Naive thymus-derived CD4-positive, alpha-beta T cell (primary cell): ENCODE measurements at regions of chr19 and their contacts with region 1.

Region 1: DNA sequence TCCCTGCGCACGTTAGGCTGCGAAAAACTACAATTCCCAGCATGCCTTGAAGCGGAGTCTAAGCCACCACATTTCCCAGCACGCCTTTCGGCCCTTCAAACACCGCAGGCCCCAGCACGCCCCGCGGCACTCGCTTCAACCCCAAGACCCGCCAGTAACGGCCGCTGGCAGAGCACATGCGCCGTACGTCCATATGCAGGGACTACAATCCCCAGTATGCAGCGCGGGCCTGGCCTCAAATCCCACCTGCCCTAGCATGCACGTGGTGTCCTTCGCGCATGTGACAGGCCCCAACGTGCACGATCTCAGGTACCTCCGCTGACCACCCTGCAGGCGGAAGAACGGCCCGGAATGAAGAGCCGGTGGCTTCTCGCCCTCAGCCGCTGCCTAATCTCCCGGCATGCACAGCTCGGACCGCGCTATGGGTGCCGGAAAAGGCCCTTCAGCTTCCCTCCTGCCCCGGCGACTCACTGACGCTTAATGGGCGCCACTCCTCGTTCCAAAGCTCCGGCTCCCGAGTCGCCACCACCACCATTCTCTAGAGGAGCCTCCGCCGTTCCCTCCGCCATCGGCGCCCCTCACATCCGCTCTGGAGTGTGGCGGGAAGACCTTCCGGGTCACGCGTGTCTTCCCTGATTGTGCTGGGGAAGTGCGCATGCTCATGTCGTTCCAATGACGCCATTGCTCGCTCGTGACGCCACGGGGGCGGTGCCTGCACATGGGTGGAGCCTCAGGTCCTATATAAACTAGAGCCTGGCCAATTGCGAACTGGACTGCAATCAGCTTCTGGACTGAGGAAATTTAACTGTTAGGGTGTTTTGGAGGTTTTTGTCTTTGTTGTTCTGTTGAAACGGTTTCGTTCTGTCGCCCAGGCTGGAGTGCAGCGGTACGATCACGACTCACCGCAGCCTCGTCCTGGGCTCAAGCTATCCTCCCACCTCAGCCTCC is at the start of gene DUS3L:
- DNase-seq: peak; percentile 90 to 97 (median 94)
- ATAC-seq: peak; percentile 97
- H3K4me3 ChIP-seq: peak within 1 kb of the TSS; percentile 95
- H3K4me3 Mint-ChIP-seq: peak within 1 kb of the TSS; percentile 94 to 100 (median 100)
- H3K27ac ChIP-seq: peak within 1 kb of the TSS; percentile 91
- H3K27ac Mint-ChIP-seq: peak within 1 kb of the TSS; percentile 99 to 100 (median 100)
- H3K4me1 ChIP-seq: peaks cover 8 to 12% of the 10 kb centered on the region in 2 donors
- H3K4me1 Mint-ChIP-seq: peaks cover 6 to 22% (median 15%) of the 10 kb centered on the region in 7 donors
- H3K27me3 ChIP-seq: no peaks in the 10 kb centered on the region
- H3K27me3 Mint-ChIP-seq: no peaks in the 10 kb centered on the region
- total RNA-seq, gene DUS3L: 53.2 to 179 (median 82.7) TPM

Region 2: GRCh38 chr19:5622463-5623396 is 168.1 kb before region 1 on chr19 and contains the starts of genes SAFB and SAFB2:
- CTCF ChIA-PET with region 1: no interaction called
- POLR2A ChIA-PET with region 1: no interaction called
- intact Hi-C with region 1: loop called (anchors 1 to 2 kb)
- DNase-seq: peak; percentile 96 to 100 (median 100)
- ATAC-seq: peak; percentile 91
- H3K4me3 ChIP-seq: peak within 1 kb of the TSS; percentile 91
- H3K4me3 Mint-ChIP-seq: peak within 1 kb of the TSS; percentile 97 to 100 (median 100)
- H3K27ac ChIP-seq: peak within 1 kb of the TSS; percentile 97
- H3K27ac Mint-ChIP-seq: peak within 1 kb of the TSS; percentile 99 to 100 (median 100)
- H3K4me1 ChIP-seq: peaks cover 54 to 66% of the 10 kb centered on the region in 2 donors
- H3K4me1 Mint-ChIP-seq: peaks cover 52 to 79% (median 70%) of the 10 kb centered on the region in 7 donors
- H3K27me3 ChIP-seq: no peaks in the 10 kb centered on the region
- H3K27me3 Mint-ChIP-seq: peaks cover 0 to 5% (median 0%) of the 10 kb centered on the region in 5 donors
- total RNA-seq, gene SAFB: 141 to 203 (median 174) TPM
- total RNA-seq, gene SAFB2: 112 to 250 (median 243) TPM

Region 3: GRCh38 chr19:5680437-5681368 is 110.1 kb before region 1 on chr19 and contains the starts of genes HSD11B1L and MICOS13:
- CTCF ChIA-PET with region 1: no interaction called
- POLR2A ChIA-PET with region 1: interaction called, 4 read pairs
- intact Hi-C with region 1: loop called (anchors 1 kb)
- DNase-seq: peak; percentile 98 to 99 (median 99)
- ATAC-seq: peak; percentile 96
- H3K4me3 ChIP-seq: peak within 1 kb of the TSS; percentile 100
- H3K4me3 Mint-ChIP-seq: peak within 1 kb of the TSS; percentile 85 to 97 (median 94)
- H3K27ac ChIP-seq: peak within 1 kb of the TSS; percentile 98
- H3K27ac Mint-ChIP-seq: peak within 1 kb of the TSS; percentile 94 to 100 (median 97)
- H3K4me1 ChIP-seq: peaks cover 8 to 18% of the 10 kb centered on the region in 2 donors
- H3K4me1 Mint-ChIP-seq: peaks cover 20 to 33% (median 25%) of the 10 kb centered on the region in 7 donors
- H3K27me3 ChIP-seq: no peaks in the 10 kb centered on the region
- H3K27me3 Mint-ChIP-seq: peaks cover 0 to 18% (median 0%) of the 10 kb centered on the region in 5 donors
- total RNA-seq, gene HSD11B1L: 2.8 to 5.2 (median 3.6) TPM
- total RNA-seq, gene MICOS13: 26.1 to 49.3 (median 38.4) TPM

Region 4: DNA sequence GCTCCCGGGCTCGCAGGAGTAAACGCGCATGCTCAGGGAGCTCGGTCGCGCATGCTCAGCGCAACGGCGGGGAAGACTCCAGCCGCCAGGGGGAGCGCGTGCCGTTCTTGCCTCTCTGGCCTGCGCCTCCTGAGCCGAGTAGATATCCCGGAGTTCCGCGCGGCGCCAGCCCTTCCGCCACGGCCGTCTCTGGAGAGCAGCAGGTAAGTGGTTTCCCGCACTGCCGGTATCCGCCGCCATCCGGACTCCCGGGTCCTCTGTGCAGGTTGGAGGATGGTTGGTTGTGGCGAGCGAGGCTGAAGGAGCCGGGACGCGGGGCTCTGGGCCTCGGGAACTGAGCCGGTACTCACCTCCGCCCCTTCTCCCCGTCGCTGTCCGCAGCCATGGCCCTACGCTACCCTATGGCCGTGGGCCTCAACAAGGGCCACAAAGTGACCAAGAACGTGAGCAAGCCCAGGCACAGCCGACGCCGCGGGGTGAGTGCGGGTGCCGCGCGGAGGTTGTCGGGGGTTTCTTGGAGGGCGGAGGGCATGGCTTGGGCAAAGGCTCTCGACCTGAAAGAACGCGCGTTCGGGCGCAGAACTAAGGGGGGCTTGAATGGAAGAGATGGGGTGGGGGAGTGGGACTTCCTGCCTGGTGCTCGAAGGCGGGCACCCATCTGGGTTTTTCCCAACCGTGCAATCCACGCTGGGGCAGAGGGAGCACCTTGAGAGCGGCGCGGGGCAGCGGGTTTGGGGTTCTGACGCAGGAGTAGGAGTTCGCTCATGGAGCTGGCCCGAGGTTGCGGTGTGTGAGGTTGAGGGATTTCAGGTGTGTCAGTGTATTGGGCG is 100.5 kb before region 1 on chr19 and contains the start of gene RPL36:
- CTCF ChIA-PET with region 1: no interaction called
- POLR2A ChIA-PET with region 1: interaction called, 5 read pairs
- intact Hi-C with region 1: loop called (anchors 1 to 2 kb)
- DNase-seq: peak; percentile 95 to 100 (median 99)
- ATAC-seq: peak; percentile 77
- H3K4me3 ChIP-seq: peak within 1 kb of the TSS; percentile 90
- H3K4me3 Mint-ChIP-seq: peak within 1 kb of the TSS; percentile 90 to 98 (median 94)
- H3K27ac ChIP-seq: peak within 1 kb of the TSS; percentile 85
- H3K27ac Mint-ChIP-seq: peak within 1 kb of the TSS; percentile 89 to 97 (median 93)
- H3K4me1 ChIP-seq: peaks cover 12 to 21% of the 10 kb centered on the region in 2 donors
- H3K4me1 Mint-ChIP-seq: peaks cover 5 to 39% (median 33%) of the 10 kb centered on the region in 7 donors
- H3K27me3 ChIP-seq: no peaks in the 10 kb centered on the region
- H3K27me3 Mint-ChIP-seq: no peaks in the 10 kb centered on the region
- total RNA-seq, gene RPL36: 865 to 1,786 (median 1,037) TPM

Region 5: DNA sequence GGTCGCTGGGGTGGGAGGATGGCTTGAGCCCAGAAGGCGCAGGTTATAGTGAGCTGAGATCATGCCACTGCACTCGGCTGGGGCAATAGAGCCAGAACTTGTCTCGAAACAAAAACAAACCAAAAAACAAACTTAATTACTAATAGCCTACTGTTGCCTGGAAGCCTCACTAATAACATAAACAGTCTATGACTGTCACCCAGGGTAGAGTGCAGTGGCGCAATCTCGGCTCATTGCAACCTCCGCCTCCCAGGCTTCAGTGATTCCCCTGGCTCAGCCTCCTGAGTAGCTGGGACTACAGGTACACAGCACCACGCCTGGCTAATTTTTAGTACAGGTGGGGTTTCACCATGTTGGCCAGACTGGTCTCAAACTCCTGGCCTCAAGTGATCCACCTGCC is 52.4 kb before region 1 on chr19:
- CTCF ChIA-PET with region 1: no interaction called
- POLR2A ChIA-PET with region 1: no interaction called
- intact Hi-C with region 1: no loop called
- DNase-seq: no peak
- ATAC-seq: no peak
- H3K4me3 ChIP-seq: no peak overlapping the region
- H3K4me3 Mint-ChIP-seq: no peak overlapping the region
- H3K27ac ChIP-seq: no peak overlapping the region
- H3K27ac Mint-ChIP-seq: no peak overlapping the region
- H3K4me1 ChIP-seq: no peaks in the 10 kb centered on the region
- H3K4me1 Mint-ChIP-seq: no peaks in the 10 kb centered on the region
- H3K27me3 ChIP-seq: no peaks in the 10 kb centered on the region
- H3K27me3 Mint-ChIP-seq: peaks cover 0 to 6% (median 3%) of the 10 kb centered on the region in 5 donors

Region 6: DNA sequence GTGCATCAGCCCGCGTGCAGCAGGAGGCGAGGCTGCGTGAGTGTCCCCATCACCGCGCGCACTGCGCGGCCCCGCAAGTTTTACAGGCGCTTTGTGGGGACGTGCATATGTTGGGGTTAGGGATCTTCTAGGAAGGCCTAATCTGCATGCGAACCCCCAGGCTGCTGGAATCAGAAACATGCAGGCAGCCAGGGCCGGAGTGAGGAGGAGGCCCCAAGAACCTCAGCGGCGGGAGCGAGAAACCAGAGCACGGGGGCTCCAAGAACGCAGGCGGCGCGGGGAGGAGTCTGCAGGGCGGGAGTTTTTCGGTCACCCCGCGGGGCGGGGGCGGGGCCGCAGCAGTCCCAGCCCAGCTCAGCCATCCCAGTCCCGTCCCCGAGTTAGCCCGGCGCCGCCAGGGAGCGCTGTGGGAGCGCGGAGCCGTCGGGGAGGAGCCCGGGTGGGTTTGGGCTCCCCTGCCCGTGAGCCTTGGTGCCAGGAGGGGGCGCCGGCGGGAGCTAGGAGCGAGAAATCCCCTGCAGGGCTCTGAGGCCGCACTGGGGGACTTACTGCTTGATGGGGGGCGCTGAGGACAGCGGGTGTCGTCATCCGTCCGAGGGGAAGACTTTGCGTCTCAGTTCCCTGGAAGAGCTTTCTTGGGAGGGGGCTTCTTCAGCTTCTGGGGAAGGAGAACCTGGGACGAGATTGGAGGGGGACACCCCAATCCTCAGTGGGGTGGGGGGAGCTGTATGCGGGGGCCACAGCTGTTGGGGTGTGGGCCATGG is 13.1 kb after region 1 on chr19:
- CTCF ChIA-PET with region 1: interaction called, 4 read pairs
- POLR2A ChIA-PET with region 1: interaction called, 14 read pairs
- intact Hi-C with region 1: loop called (anchors 1 to 2 kb)
- DNase-seq: peak; percentile 89 to 99 (median 93)
- ATAC-seq: peak; percentile 98
- H3K4me3 ChIP-seq: peak overlapping the region; percentile 64
- H3K4me3 Mint-ChIP-seq: peak overlapping the region; percentile 62 to 87 (median 80)
- H3K27ac ChIP-seq: peak overlapping the region; percentile 44
- H3K27ac Mint-ChIP-seq: peak overlapping the region in 8 of 9 donors; percentile 28 to 83 (median 72)
- H3K4me1 ChIP-seq: peaks cover 13 to 20% of the 10 kb centered on the region in 2 donors
- H3K4me1 Mint-ChIP-seq: peaks cover 7 to 24% (median 21%) of the 10 kb centered on the region in 7 donors
- H3K27me3 ChIP-seq: peaks cover 0 to 2% of the 10 kb centered on the region in 2 donors
- H3K27me3 Mint-ChIP-seq: peaks cover 12 to 45% (median 18%) of the 10 kb centered on the region in 5 donors

Region 7: GRCh38 chr19:5827891-5828660 is 37.2 kb after region 1 on chr19:
- CTCF ChIA-PET with region 1: no interaction called
- POLR2A ChIA-PET with region 1: interaction called, 26 read pairs
- intact Hi-C with region 1: loop called in 1 of 2 experiments (anchors 1 kb)
- DNase-seq: peak; percentile 91 to 98 (median 94)
- ATAC-seq: peak; percentile 90
- H3K4me3 ChIP-seq: peak overlapping the region; percentile 76
- H3K4me3 Mint-ChIP-seq: peak overlapping the region; percentile 91 to 100 (median 97)
- H3K27ac ChIP-seq: peak overlapping the region; percentile 80
- H3K27ac Mint-ChIP-seq: peak overlapping the region; percentile 94 to 100 (median 97)
- H3K4me1 ChIP-seq: peaks cover 10 to 17% of the 10 kb centered on the region in 2 donors
- H3K4me1 Mint-ChIP-seq: peaks cover 5 to 19% (median 10%) of the 10 kb centered on the region in 7 donors
- H3K27me3 ChIP-seq: no peaks in the 10 kb centered on the region
- H3K27me3 Mint-ChIP-seq: peaks cover 0 to 6% (median 0%) of the 10 kb centered on the region in 5 donors